ENCODE measurements at regions of chr12 and their contacts with region 1.

Region 1: DNA sequence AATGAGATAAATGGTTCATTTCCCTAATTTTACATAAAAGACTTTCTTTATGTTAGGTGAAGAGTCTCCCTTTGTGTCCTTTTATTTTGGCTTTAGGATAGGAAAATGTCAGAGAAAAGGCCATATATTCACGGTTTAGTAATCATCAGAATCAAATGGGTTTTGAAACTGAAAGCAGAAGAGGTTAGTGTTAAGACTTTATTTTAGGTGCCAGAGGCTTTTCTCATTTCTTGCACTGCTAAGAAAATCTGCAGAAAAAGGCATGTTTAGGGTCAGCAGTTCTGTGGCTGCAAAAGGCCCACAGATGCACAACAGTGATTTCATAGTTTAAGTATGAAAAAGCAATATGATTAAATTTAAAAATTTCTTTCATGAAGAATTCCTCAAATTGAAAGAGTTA is 80.4 kb upstream of the SINHCAF start:
- DNase-seq: no peak
- ATAC-seq: no peak
- H3K4me3 ChIP-seq: no peak overlapping the region
- H3K27ac ChIP-seq: no peak overlapping the region
- H3K4me1 ChIP-seq: no peaks in the 10 kb centered on the region
- H3K27me3 ChIP-seq: no peaks in the 10 kb centered on the region
- CTCF ChIP-seq: no peak
- POLR2A ChIP-seq: no peak

Region 2: DNA sequence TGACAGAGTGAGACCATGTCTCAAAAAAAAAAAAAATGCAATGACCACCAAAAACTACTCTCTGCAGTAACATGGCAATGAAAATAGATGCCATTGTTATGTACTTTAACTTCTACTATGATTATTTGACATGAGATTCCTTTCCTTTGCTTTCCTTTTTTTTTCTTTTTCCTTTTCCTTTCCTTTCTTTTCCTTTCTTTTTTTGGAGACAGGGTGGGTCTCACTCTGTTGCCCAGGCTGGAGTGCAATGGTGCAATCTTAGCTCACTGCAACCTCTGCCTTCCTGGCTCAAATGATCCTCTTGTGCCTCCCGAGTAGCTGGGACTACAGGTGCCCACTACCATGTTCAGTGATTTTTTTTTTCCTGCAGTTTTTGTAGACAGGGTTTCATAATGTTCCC is 228.3 kb after region 1 on chr12:
- intact Hi-C with region 1: loop called in 1 of 2 experiments (anchors 5 kb)
- DNase-seq: no peak
- ATAC-seq: no peak
- H3K4me3 ChIP-seq: no peak overlapping the region
- H3K27ac ChIP-seq: no peak overlapping the region
- H3K4me1 ChIP-seq: peaks cover 0 to 4% (median 0%) of the 10 kb centered on the region in 4 donors
- H3K27me3 ChIP-seq: no peaks in the 10 kb centered on the region
- CTCF ChIP-seq: no peak
- POLR2A ChIP-seq: no peak

Region 3: DNA sequence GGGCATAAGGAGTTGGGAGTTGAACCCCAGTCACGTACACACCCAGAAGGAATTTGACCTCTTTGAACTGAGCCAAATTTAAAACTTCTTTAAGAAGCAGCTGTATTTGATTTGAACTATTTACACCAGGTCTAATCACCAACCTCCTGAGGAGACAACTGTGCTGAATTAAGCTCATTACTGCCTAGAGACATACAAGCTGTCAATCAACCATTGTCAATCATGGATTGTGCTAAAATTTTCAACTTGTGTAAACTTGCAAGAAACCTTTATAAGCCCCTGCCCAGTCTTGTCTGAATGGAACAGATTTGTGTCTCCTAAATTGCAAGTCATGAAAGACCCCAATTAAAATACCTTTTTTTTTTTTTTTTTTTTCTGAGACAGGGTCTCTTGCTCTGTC is 508.6 kb after region 1 on chr12:
- intact Hi-C with region 1: no loop called
- DNase-seq: no peak
- ATAC-seq: no peak
- H3K4me3 ChIP-seq: no peak overlapping the region
- H3K27ac ChIP-seq: no peak overlapping the region
- H3K4me1 ChIP-seq: no peaks in the 10 kb centered on the region
- H3K27me3 ChIP-seq: no peaks in the 10 kb centered on the region
- CTCF ChIP-seq: no peak
- POLR2A ChIP-seq: no peak